ENCODE measurements at regions of chr3 and their contacts with region 1.

Region 1: GRCh38 chr3:109023656-109024254 is 70.1 kb upstream of the GUCA1C start:
- DNase-seq: peak; percentile 27
- H3K27ac ChIP-seq: no peak overlapping the region
- CTCF ChIP-seq: peak; percentile 76

Region 2: DNA sequence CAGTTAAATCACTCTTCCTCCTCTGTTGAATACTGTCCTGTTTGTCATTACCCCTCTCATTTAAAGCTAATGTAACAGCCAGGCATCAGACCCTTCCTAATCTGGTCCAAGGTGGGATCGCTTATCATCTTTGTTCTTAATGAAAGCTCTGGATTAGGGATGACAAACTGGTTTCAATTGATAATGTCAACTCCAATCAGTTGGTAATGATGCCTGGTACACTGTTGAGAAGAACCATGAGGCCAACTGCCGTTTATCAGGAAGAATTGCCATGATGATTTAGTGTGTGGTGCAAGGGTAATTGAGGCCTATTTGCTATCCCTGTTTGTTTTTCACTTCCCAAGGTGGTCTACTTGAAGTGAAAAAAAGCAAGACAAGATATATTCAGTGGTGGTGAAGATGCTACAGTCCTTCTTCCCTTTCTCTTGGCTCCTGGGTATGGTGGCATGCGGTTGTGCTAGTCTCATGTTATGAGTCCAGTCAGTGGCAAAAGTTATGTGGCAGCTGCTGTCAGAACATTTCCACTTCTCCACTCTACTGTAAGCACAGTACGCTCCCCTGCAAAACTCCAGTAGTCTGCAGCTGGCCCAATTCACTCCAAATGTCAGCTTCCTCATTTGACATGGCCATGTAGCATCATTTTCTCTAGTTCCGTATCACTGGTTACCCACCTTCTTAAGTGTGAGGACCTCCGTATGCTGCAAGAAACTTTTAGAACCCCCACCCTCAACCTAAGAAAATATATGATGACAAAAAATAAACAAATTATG is 21.7 kb after region 1 on chr3:
- CTCF ChIA-PET with region 1: no interaction called
- POLR2A ChIA-PET with region 1: no interaction called
- DNase-seq: no peak
- H3K27ac ChIP-seq: no peak overlapping the region
- CTCF ChIP-seq: no peak

Region 3: DNA sequence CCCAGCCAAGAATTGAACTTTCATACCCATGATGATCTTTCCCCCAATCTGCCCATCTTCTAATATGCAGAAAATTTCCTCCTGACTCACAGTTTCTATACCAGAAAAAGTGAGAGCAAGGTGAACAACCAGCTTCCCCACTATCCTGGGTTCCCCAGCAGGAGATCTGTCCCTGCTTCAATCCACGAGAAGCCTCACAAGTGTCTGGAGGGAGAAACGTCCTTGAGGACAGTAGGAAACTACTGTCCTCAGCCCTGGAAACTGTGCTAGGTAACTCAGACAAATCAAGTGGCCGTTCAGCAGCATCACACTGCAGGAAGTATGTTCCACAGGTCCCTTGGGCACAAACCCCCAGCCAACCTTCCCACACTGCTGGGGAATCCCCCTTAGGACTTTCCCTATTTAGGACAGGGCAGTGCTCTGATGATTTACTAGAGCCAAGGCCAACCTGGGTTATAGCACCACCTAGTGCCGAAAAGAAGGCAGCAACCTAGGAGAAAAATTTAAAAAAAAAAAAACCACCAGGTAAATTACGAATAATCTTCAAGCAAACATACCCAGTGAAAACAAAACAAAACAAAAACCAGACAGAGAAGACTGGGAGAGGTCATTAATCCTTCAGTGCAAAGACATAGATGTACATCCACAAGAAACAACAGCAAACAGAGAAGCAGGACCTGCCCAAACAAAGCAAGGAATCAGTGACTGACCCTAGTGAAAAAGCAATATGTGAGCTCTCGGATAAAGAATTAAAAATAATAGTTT is 58.2 kb after region 1 on chr3:
- CTCF ChIA-PET with region 1: interaction called, 11 read pairs
- POLR2A ChIA-PET with region 1: no interaction called
- DNase-seq: peak; percentile 43
- H3K27ac ChIP-seq: no peak overlapping the region
- CTCF ChIP-seq: peak; percentile 65